ENCODE measurements at regions of chrX and their contacts with region 1.

Region 1: DNA sequence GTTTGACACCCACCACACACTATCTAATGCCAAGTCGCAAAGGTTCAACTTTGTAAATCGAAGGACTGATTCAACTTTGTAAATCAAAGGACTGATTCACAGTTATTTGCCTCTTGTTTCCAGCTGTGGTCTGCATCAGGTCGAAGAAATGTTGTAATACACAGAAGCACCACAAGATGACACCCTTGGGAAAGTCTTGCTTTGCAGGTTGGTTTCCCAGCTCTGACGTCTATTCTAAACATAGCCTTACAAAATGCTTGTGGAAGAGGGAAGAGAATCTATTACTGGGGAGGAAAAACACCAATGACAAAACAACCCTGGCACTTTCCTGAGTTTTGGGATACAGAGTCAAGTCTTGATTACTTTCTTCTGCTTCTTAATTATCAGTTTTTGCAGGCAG is 35.3 kb downstream of the SUPT20HL1 start:
- DNase-seq: peak; percentile 60
- H3K4me3 ChIP-seq: no peak overlapping the region
- H3K27ac ChIP-seq: no peak overlapping the region
- H3K4me1 ChIP-seq: no peaks in the 10 kb centered on the region
- CTCF ChIP-seq: peak; percentile 81

Region 2: DNA sequence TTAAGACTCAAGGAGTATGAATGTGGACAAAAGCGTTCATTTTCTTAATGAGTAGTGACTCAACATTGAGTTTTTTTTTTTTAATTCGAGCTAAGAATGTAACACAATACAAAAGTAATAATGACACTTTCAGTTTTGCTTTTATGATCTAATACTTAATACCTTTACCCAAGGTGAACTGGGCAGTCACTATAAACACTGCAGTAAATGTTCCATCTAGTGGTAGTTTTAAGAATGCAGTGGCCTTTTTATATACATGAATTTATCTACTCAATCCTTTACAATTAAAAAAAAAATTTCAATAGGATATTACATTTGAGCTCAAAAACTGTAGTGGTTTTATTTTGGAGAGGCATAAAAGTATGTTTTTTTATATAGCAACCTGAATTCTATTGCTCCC is 103.2 kb after region 1 on chrX:
- CTCF ChIA-PET with region 1: interaction called, 3 read pairs
- POLR2A ChIA-PET with region 1: interaction called, 3 read pairs
- intact Hi-C with region 1: loop called (anchors 1 kb)
- DNase-seq: peak; percentile 37
- H3K4me3 ChIP-seq: no peak overlapping the region
- H3K27ac ChIP-seq: no peak overlapping the region
- H3K4me1 ChIP-seq: no peaks in the 10 kb centered on the region
- CTCF ChIP-seq: peak; percentile 79

Region 3: DNA sequence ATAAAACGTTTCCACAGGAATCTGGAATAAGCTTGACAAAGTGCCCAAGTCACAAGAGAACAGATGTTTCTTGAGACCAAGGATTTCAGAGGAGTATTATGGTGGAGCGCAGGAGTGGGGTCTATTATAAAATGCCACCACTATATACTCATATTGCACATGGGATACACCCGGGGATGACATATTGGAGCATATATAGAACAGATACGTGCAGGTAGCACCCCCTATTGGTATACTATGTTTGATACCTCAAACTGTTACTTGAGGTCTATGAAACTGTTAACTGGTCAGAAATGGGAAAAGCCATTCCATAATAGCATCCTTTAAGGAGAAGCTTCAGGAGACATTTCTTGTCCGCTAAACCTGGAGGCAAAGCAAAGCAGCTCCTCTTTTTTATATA is 165.3 kb after region 1 on chrX:
- CTCF ChIA-PET with region 1: no interaction called
- POLR2A ChIA-PET with region 1: no interaction called
- intact Hi-C with region 1: loop called (anchors 5 kb)
- DNase-seq: peak; percentile 44
- H3K4me3 ChIP-seq: no peak overlapping the region
- H3K27ac ChIP-seq: no peak overlapping the region
- H3K4me1 ChIP-seq: no peaks in the 10 kb centered on the region
- CTCF ChIP-seq: peak; percentile 68

Region 4: DNA sequence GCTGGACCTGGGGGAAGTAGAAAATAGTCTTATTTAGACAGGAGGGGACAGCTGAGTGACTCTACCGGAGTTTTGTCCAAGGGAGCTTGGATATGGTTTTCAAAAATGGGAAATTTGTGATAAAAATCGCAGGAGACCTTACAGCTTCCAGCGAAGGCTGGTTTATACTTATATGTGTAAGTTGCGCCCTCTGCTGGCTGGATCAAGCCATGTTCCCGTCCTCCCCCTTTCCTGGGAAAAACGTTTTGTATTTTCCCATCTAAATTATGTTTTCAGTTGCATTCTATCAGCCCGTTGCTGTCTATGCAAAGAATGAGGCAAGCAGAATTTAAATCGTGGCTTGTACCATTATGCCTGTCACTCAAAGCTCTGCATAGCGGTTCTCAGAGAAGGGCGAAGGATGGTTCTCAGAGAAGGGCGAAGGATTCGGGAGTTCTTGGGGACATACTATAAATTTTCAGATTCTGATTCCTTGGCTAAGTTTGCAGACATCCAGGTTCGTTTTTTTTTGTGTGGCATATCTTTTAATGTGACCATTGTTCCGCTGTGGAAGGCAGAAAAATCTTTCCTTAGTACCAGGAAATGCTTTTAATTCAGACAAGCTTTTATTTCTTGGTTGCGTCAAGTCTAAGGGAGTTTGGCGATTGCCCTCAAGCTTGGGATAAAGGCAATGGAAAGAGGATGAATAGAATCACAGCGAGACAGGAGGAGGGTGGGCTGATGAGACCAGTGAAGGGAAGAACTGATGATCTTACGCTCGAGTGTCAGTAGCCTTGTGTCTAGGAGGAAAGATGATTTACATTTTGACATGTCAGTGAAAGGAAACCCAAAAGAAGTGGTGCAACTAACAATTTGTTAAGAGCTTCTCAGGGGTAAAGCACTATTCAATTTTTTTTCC is 748.5 kb after region 1 on chrX:
- CTCF ChIA-PET with region 1: no interaction called
- POLR2A ChIA-PET with region 1: no interaction called
- intact Hi-C with region 1: loop called (anchors 10 kb)
- DNase-seq: peak; percentile 29
- H3K4me3 ChIP-seq: no peak overlapping the region
- H3K27ac ChIP-seq: no peak overlapping the region
- H3K4me1 ChIP-seq: no peaks in the 10 kb centered on the region
- CTCF ChIP-seq: peak; percentile 78